CD4-positive, alpha-beta T cell (primary cell): ENCODE measurements at regions of chr2 and their contacts with region 1.

Region 1: DNA sequence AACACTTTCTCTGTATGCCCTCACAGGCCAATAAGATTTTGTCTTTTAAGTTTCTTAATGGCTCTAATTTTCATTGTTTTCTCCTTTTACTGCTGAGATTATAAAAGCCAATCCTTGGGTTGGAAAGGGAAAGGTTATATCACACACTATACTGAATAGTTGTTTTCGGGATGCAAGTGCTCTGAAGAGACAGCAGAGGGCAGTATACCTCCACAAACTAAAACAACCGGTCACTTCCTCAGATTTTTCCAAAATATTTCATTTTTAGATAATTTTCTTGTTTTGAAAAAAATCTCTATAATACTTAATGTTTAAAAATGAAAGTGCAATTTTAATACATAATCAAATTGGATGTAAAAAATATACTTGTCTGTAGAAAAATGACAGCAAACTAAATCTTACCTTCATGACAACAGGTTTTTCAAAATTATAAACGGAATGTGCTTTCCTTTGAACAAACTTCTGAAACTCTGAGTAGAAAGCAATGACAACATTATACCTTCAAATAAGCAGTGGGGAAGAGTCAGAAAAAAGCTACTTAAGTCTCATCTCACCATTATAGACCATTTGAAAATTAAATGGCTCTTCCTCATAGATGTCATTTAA is 82.7 kb downstream of the ORC4 start:
- DNase-seq: peak in 3 of 14 experiments; percentile 35 to 57 (median 43)
- ATAC-seq: peak; percentile 68
- H3K4me3 ChIP-seq: no peak overlapping the region
- H3K4me3 Mint-ChIP-seq: no peak overlapping the region
- H3K27ac ChIP-seq: no peak overlapping the region
- H3K27ac Mint-ChIP-seq: no peak overlapping the region
- H3K4me1 ChIP-seq: no peaks in the 10 kb centered on the region
- H3K4me1 Mint-ChIP-seq: no peaks in the 10 kb centered on the region
- H3K27me3 ChIP-seq: no peaks in the 10 kb centered on the region
- H3K27me3 Mint-ChIP-seq: no peaks in the 10 kb centered on the region
- CTCF ChIP-seq: peak; percentile 97

Region 2: GRCh38 chr2:148048475-148049221 is 110.8 kb after region 1 on chr2:
- CTCF ChIA-PET with region 1: no interaction called
- POLR2A ChIA-PET with region 1: no interaction called
- intact Hi-C with region 1: no loop called
- DNase-seq: no peak
- ATAC-seq: no peak
- H3K4me3 ChIP-seq: no peak overlapping the region
- H3K4me3 Mint-ChIP-seq: no peak overlapping the region
- H3K27ac ChIP-seq: no peak overlapping the region
- H3K27ac Mint-ChIP-seq: no peak overlapping the region
- H3K4me1 ChIP-seq: no peaks in the 10 kb centered on the region
- H3K4me1 Mint-ChIP-seq: peaks cover 57% of the 10 kb centered on the region
- H3K27me3 ChIP-seq: no peaks in the 10 kb centered on the region
- H3K27me3 Mint-ChIP-seq: no peaks in the 10 kb centered on the region
- CTCF ChIP-seq: no peak

Region 3: GRCh38 chr2:148479398-148479797 is 541.6 kb after region 1 on chr2:
- CTCF ChIA-PET with region 1: no interaction called
- POLR2A ChIA-PET with region 1: no interaction called
- intact Hi-C with region 1: no loop called
- DNase-seq: no peak
- ATAC-seq: no peak
- H3K4me3 ChIP-seq: no peak overlapping the region
- H3K4me3 Mint-ChIP-seq: no peak overlapping the region
- H3K27ac ChIP-seq: no peak overlapping the region
- H3K27ac Mint-ChIP-seq: no peak overlapping the region
- H3K4me1 ChIP-seq: no peaks in the 10 kb centered on the region
- H3K4me1 Mint-ChIP-seq: no peaks in the 10 kb centered on the region
- H3K27me3 ChIP-seq: no peaks in the 10 kb centered on the region
- H3K27me3 Mint-ChIP-seq: no peaks in the 10 kb centered on the region
- CTCF ChIP-seq: no peak

Region 4: DNA sequence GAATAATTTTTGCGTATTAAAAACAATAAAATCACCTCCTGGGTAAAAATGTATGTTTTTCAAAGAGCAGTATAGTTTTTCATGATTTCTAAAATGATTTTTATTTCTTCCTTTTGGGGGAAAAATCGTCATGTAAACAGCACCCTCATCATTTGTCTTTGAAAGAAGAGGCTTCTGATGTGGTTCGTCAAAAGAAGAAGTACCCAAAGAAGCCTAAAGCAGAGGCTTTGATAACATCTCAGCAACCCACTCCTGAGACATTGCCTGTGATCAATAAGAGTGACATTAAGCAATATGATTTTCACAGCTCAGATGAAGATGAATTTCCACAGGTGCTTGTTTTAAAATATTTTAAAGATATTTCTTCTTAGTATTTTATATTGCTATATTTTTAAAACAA is 827.0 kb after region 1 on chr2:
- CTCF ChIA-PET with region 1: no interaction called
- POLR2A ChIA-PET with region 1: no interaction called
- intact Hi-C with region 1: loop called in 1 of 2 experiments (anchors 10 kb)
- DNase-seq: peak in 3 of 14 experiments; percentile 24 to 60 (median 51)
- ATAC-seq: peak; percentile 78
- H3K4me3 ChIP-seq: no peak overlapping the region
- H3K4me3 Mint-ChIP-seq: peak overlapping the region; percentile 27
- H3K27ac ChIP-seq: no peak overlapping the region
- H3K27ac Mint-ChIP-seq: peak overlapping the region; percentile 7
- H3K4me1 ChIP-seq: peaks cover 3% of the 10 kb centered on the region
- H3K4me1 Mint-ChIP-seq: peaks cover 52% of the 10 kb centered on the region
- H3K27me3 ChIP-seq: no peaks in the 10 kb centered on the region
- H3K27me3 Mint-ChIP-seq: no peaks in the 10 kb centered on the region
- CTCF ChIP-seq: no peak